Activated CD4-positive, alpha-beta memory T cell treated with anti-CD3 and anti-CD28 coated beads for 36 hours (primary cell): ENCODE measurements at regions of chr7 and their contacts with region 1.

Region 1: GRCh38 chr7:39732837-39733804 is 109.7 kb downstream of the RALA start:
- DNase-seq: peak; percentile 98
- H3K4me3 Mint-ChIP-seq: peak overlapping the region; percentile 88
- H3K27ac Mint-ChIP-seq: peak overlapping the region; percentile 75
- H3K4me1 Mint-ChIP-seq: peaks cover 33% of the 10 kb centered on the region
- H3K27me3 Mint-ChIP-seq: no peaks in the 10 kb centered on the region

Region 2: DNA sequence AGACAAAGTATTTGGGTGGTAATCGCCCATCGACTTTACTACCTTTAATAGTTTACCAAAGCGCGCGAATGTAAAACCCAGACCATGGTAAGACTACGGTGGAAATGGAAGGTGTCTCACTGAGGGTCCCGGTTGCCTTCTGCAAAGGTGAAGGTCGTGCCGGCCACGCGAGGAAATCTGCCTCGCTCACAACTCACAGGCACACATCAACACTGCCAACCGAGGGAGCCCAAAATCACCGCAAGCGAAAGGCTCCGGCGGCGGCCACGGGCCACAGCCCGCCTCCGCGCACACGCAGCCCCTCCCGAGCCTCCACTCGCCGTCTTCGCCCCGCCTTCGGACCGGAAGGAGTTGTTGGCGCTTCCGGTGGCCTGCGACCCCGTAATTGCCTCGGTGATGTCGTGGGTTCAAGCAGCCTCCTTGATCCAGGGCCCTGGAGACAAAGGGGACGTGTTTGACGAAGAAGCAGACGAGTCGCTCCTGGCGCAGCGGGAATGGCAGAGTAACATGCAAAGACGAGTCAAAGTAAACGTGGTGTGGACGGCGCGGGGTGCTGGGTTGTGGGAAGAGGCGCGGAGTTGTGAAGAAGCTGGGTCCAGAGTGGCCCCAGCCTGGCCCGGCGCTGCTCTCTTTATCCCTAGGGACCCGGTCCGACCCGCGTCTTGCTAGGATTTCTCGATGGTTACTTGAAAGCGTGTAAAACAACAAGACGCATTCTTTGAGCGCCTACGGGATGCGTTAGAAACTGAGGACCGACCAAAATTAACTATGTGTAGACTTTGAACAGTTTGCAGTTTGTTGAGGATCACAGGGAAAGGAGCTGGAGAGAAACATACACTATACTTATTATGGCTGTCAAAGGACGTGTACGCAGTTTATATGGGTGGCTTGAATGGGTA is 166.8 kb before region 1 on chr7 and contains the start of gene YAE1:
- CTCF ChIA-PET with region 1: interaction called, 3 read pairs
- POLR2A ChIA-PET with region 1: no interaction called
- intact Hi-C with region 1: loop called (anchors 1 kb)
- DNase-seq: peak; percentile 88
- H3K4me3 Mint-ChIP-seq: peak within 1 kb of the TSS; percentile 98
- H3K27ac Mint-ChIP-seq: peak within 1 kb of the TSS; percentile 92
- H3K4me1 Mint-ChIP-seq: peaks cover 17% of the 10 kb centered on the region
- H3K27me3 Mint-ChIP-seq: no peaks in the 10 kb centered on the region
- total RNA-seq, gene YAE1: 7.3 to 8.8 TPM

Region 3: GRCh38 chr7:39623018-39623731 is 109.9 kb before region 1 on chr7 and contains the start of gene RALA:
- CTCF ChIA-PET with region 1: interaction called, 6 read pairs
- POLR2A ChIA-PET with region 1: interaction called, 20 read pairs
- intact Hi-C with region 1: loop called (anchors 1 kb)
- DNase-seq: peak; percentile 94
- H3K4me3 Mint-ChIP-seq: peak within 1 kb of the TSS; percentile 90
- H3K27ac Mint-ChIP-seq: peak within 1 kb of the TSS; percentile 87
- H3K4me1 Mint-ChIP-seq: peaks cover 45% of the 10 kb centered on the region
- H3K27me3 Mint-ChIP-seq: no peaks in the 10 kb centered on the region
- total RNA-seq, gene RALA: 27.1 to 31.4 TPM

Region 4: GRCh38 chr7:39746103-39746819 is 13.1 kb after region 1 on chr7:
- CTCF ChIA-PET with region 1: interaction called, 10 read pairs
- POLR2A ChIA-PET with region 1: interaction called, 3 read pairs
- intact Hi-C with region 1: loop called (anchors 1 kb)
- DNase-seq: peak; percentile 69
- H3K4me3 Mint-ChIP-seq: no peak overlapping the region
- H3K27ac Mint-ChIP-seq: no peak overlapping the region
- H3K4me1 Mint-ChIP-seq: peaks cover 9% of the 10 kb centered on the region
- H3K27me3 Mint-ChIP-seq: no peaks in the 10 kb centered on the region

Region 5: GRCh38 chr7:40525764-40526163 is 792.6 kb after region 1 on chr7:
- CTCF ChIA-PET with region 1: no interaction called
- POLR2A ChIA-PET with region 1: no interaction called
- intact Hi-C with region 1: no loop called
- DNase-seq: no peak
- H3K4me3 Mint-ChIP-seq: no peak overlapping the region
- H3K27ac Mint-ChIP-seq: no peak overlapping the region
- H3K4me1 Mint-ChIP-seq: no peaks in the 10 kb centered on the region
- H3K27me3 Mint-ChIP-seq: no peaks in the 10 kb centered on the region